ENCODE measurements at regions of chr6 and their contacts with region 1.

Region 1: DNA sequence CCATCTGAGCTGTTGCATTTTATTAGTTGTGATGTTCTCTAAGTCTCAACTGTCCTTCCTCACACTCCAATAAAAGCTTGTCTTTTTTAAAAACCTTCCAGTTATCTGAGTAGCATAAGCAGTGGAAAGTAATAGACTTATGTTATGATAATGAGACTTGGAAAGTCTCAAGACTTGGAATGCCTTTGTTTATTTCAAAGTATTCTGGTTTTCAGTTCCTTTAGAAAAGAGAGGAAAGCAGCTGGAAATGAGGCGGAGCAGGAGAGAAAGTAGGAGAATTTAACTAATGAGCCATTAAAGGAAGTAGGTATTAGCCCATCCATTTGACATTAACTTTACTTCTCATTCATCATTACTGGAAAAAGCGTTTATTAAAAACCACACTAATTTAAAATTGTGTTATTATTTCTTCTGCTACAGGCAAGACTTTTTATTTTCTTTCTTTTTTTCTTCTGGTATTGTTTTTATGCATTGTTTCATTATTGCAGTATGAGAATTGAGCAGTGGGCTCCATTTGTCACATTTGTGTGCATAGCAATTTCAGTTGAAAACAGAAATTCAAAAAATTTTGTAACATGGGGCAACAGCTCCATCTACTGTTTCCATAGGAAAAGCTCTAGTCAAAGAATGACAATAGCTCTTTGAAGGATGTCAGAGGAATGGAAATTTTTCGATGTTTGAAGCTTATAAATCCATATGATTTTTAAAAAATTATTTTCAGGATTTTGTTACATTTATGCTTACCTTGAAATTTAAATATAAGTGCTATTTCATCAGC is 194.8 kb downstream of the COL9A1 start:
- DNase-seq: peak; percentile 61
- ATAC-seq: peak; percentile 17
- H3K4me3 ChIP-seq: no peak overlapping the region
- H3K4me3 Mint-ChIP-seq: no peak overlapping the region
- H3K27ac ChIP-seq: no peak overlapping the region
- H3K27ac Mint-ChIP-seq: no peak overlapping the region
- H3K4me1 ChIP-seq: no peaks in the 10 kb centered on the region
- H3K4me1 Mint-ChIP-seq: peaks cover 11% of the 10 kb centered on the region
- H3K27me3 ChIP-seq: no peaks in the 10 kb centered on the region
- H3K27me3 Mint-ChIP-seq: no peaks in the 10 kb centered on the region
- CTCF ChIP-seq: peak; percentile 92

Region 2: DNA sequence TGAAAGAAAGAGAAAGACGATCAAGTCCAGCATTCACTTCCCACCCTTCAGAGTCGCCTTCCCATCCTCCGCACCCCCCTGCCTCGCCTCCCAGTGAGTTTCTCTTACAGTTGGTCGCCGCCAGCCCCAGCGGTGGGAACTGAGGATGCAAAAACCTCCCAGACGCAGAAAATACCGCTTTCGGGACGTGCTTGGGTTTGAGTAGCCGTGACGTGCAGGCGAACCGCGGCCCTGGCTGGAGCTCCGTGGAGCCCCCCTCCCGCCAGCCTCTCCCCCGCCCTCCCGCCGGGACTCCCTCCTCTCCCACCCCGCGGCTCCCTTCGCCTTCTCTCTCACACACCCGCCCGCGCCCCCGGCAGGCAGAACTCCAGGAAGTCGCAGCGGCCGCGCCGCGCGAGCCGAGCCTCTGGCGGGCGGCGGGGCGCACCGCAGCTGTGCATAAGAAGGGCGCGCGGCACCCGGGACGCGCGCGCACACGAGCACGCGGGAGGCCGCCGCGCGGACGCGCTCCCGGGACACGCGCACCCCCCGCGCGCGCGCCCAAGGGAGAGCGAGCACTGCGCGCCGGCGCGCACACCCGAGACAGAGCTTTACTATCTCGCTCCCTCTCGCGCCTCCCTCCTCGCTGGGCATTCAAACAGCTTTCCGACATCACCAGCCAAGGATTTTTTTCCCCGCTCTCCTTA is 1473.2 kb before region 1 on chr6 and contains the start of gene ADGRB3:
- CTCF ChIA-PET with region 1: interaction called, 7 read pairs
- POLR2A ChIA-PET with region 1: no interaction called
- intact Hi-C with region 1: loop called (anchors 5 kb)
- DNase-seq: peak; percentile 39
- ATAC-seq: no peak
- H3K4me3 ChIP-seq: peak within 1 kb of the TSS; percentile 8 to 63 (median 42)
- H3K4me3 Mint-ChIP-seq: peak within 1 kb of the TSS; percentile 89
- H3K27ac ChIP-seq: no peak within 1 kb of the TSS
- H3K27ac Mint-ChIP-seq: no peak within 1 kb of the TSS
- H3K4me1 ChIP-seq: peaks cover 20 to 21% of the 10 kb centered on the region in 2 donors
- H3K4me1 Mint-ChIP-seq: peaks cover 24% of the 10 kb centered on the region
- H3K27me3 ChIP-seq: peaks cover 1 to 16% (median 11%) of the 10 kb centered on the region in 4 experiments
- H3K27me3 Mint-ChIP-seq: peaks cover 47% of the 10 kb centered on the region
- CTCF ChIP-seq: no peak
- total RNA-seq, gene ADGRB3: not detected in 2 replicates

Region 3: GRCh38 chr6:68876792-68877493 is 1231.1 kb before region 1 on chr6:
- CTCF ChIA-PET with region 1: no interaction called
- POLR2A ChIA-PET with region 1: no interaction called
- intact Hi-C with region 1: loop called (anchors 5 kb)
- DNase-seq: no peak
- ATAC-seq: no peak
- H3K4me3 ChIP-seq: no peak overlapping the region
- H3K4me3 Mint-ChIP-seq: no peak overlapping the region
- H3K27ac ChIP-seq: no peak overlapping the region
- H3K27ac Mint-ChIP-seq: no peak overlapping the region
- H3K4me1 ChIP-seq: no peaks in the 10 kb centered on the region
- H3K4me1 Mint-ChIP-seq: no peaks in the 10 kb centered on the region
- H3K27me3 ChIP-seq: no peaks in the 10 kb centered on the region
- H3K27me3 Mint-ChIP-seq: no peaks in the 10 kb centered on the region
- CTCF ChIP-seq: peak; percentile 43

Region 4: DNA sequence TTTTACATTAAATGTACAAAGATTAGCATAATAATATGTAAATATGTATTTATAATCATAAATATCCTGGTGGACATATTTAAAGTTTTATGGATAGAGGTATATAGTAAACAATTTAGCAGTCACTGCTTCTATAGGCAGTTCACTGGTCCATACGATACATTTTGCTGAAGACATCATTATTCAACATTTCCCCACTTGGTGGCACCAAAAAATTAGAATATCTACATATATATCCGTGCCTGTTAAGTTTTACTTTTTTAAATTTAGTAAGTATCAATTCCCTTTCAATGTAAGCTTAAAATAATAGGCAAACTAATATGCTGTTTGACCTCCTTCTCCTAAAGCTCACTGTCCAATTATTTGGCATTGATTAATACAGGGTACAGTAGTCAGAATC is 375.4 kb before region 1 on chr6:
- CTCF ChIA-PET with region 1: interaction called, 47 read pairs
- POLR2A ChIA-PET with region 1: no interaction called
- intact Hi-C with region 1: loop called (anchors 1 kb)
- DNase-seq: peak; percentile 44
- ATAC-seq: peak; percentile 45
- H3K4me3 ChIP-seq: no peak overlapping the region
- H3K4me3 Mint-ChIP-seq: no peak overlapping the region
- H3K27ac ChIP-seq: peak overlapping the region in 1 of 2 donors; percentile 34
- H3K27ac Mint-ChIP-seq: no peak overlapping the region
- H3K4me1 ChIP-seq: no peaks in the 10 kb centered on the region
- H3K4me1 Mint-ChIP-seq: peaks cover 16% of the 10 kb centered on the region
- H3K27me3 ChIP-seq: no peaks in the 10 kb centered on the region
- H3K27me3 Mint-ChIP-seq: no peaks in the 10 kb centered on the region
- CTCF ChIP-seq: peak; percentile 61

Region 5: DNA sequence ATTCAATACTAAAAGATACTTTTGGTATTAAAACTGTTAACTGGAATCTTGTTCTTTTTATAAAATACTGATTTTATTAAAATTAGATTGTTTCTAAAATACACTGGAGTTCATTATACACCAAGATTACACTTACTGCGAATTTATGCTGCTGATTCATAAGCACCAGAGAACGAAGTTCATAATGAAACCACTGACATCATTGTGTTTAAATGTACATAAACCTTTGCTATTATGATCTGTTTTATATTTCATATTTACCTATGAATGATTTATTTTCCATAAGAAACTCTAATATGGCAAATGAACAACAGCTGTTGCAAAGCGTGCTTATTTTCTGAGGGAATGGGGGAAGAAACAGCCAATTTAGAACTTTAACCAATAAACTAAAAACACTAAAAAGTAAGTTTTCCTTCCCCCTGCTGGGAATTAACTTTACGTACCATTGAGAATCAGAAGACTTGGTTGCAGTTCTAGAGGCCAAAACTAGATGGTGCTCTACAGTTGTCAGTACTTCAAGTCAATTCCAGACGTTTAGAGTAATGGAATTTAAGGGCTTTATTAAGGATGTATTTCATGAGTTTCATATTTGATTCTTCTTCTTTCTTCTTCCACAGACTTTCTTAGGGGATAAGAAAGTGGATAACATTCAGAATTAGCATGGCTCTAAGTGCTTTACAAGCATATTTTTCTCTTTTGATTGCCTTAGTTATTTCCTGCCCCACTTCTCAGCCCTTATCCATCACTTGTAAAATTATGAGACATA is 272.4 kb before region 1 on chr6:
- CTCF ChIA-PET with region 1: interaction called, 45 read pairs
- POLR2A ChIA-PET with region 1: no interaction called
- intact Hi-C with region 1: loop called (anchors 1 kb)
- DNase-seq: peak; percentile 74
- ATAC-seq: peak; percentile 70
- H3K4me3 ChIP-seq: no peak overlapping the region
- H3K4me3 Mint-ChIP-seq: peak overlapping the region; percentile 40
- H3K27ac ChIP-seq: peak overlapping the region in 1 of 2 donors; percentile 53
- H3K27ac Mint-ChIP-seq: peak overlapping the region; percentile 12
- H3K4me1 ChIP-seq: peaks cover 15 to 21% of the 10 kb centered on the region in 2 donors
- H3K4me1 Mint-ChIP-seq: peaks cover 21% of the 10 kb centered on the region
- H3K27me3 ChIP-seq: no peaks in the 10 kb centered on the region
- H3K27me3 Mint-ChIP-seq: no peaks in the 10 kb centered on the region
- CTCF ChIP-seq: peak; percentile 96

Region 6: DNA sequence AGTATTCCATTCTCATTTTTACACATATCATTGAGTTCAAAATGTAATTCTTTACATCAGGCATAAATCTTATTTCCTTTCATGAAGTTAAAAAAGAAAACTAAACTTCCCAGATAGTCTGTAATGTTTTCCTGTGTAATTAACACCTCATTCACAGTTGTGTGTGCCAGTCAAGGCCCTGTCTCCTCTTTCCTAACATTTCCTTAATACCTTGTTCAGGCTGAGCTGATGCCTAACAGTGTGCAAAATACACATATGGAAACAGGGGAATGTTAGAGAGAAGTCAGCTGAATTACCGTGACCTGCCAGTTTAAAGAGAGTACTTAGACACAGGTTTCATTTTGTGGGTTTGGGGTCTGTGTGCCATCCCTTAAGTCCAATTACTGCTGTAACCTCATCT is 13.9 kb before region 1 on chr6:
- CTCF ChIA-PET with region 1: interaction called, 19 read pairs
- POLR2A ChIA-PET with region 1: no interaction called
- intact Hi-C with region 1: no loop called
- DNase-seq: no peak
- ATAC-seq: no peak
- H3K4me3 ChIP-seq: no peak overlapping the region
- H3K4me3 Mint-ChIP-seq: no peak overlapping the region
- H3K27ac ChIP-seq: no peak overlapping the region
- H3K27ac Mint-ChIP-seq: no peak overlapping the region
- H3K4me1 ChIP-seq: no peaks in the 10 kb centered on the region
- H3K4me1 Mint-ChIP-seq: no peaks in the 10 kb centered on the region
- H3K27me3 ChIP-seq: no peaks in the 10 kb centered on the region
- H3K27me3 Mint-ChIP-seq: no peaks in the 10 kb centered on the region
- CTCF ChIP-seq: no peak

Region 7: DNA sequence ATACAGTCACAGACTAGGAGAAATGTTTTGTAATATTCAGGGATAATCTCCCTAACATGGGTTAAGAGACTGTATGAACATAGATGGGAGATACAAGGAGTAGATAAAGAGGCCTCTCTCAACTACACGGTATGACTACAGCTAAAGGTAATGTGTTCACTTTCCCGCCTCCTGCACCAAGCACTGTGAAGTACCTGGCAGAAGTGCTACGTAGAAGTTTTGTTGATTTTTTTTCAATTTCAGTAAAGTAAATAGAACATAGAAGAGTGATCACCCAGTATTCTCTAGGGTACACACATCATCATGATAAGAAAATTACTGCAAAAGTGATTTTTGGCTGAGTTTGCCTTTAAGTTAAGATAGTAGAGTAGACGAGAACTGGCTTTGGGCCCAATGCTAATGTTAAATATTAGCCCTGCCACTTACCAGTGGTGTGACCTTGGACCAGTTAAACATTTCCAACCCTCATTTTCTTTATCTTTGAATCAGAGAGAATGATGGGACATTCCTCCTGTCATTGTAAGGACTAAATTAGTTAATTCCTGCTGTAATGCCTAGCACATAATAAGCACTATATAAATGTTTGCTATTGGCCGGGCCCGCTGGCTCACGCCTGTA is 11.3 kb after region 1 on chr6:
- CTCF ChIA-PET with region 1: interaction called, 25 read pairs
- POLR2A ChIA-PET with region 1: no interaction called
- intact Hi-C with region 1: no loop called
- DNase-seq: no peak
- ATAC-seq: no peak
- H3K4me3 ChIP-seq: no peak overlapping the region
- H3K4me3 Mint-ChIP-seq: no peak overlapping the region
- H3K27ac ChIP-seq: no peak overlapping the region
- H3K27ac Mint-ChIP-seq: no peak overlapping the region
- H3K4me1 ChIP-seq: no peaks in the 10 kb centered on the region
- H3K4me1 Mint-ChIP-seq: no peaks in the 10 kb centered on the region
- H3K27me3 ChIP-seq: no peaks in the 10 kb centered on the region
- H3K27me3 Mint-ChIP-seq: no peaks in the 10 kb centered on the region
- CTCF ChIP-seq: no peak